Activated naive CD4-positive, alpha-beta T cell treated with anti-CD3 and anti-CD28 coated beads, Interleukin-2, amount 10 ng/mL, durations not matched to agents 7 days and 5 days (primary cell): ENCODE measurements at regions of chr11 and their contacts with region 1.

Region 1: DNA sequence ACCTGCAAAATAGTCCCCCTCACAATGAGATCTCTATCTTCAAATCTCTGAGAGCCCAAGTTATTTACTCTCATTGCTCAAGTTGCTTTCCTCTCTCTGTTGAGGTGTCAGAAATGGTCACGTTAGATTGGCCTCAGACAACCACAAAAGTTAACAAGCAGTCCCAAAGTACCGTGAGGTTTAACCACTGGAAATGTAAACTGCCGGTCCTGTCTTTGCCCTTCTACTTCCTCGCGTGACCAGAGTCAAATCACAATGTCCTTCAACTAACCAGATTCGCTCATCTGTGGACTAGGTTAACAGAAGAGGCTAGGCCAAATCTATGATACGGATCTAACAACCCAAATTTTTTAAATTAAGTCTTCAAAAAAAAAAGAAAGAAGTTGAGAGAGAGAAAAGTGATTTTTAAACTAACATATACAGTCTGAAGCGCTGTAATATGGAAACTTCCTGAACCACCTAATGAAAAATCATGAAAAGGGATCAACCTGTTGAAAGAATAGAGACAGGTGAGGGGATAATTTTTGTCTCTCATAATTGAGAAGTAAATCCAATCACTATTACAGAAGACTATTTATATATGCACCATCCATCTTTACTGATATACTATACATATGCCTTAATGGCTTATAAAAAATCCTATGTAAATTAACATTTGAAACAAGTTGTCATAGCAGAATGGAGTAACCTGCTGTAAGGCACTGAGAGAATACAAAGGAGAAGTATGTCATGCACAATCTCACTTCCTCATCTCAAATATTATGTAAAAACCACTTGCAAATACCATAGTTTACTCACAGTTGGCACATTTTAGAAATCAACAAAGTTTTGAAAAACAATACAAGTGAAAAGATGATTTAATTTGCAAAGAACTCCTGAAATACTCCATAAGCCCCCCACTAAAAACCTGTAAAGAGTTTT is 3.3 kb upstream of the JAML start:
- DNase-seq: no peak
- H3K4me3 Mint-ChIP-seq: no peak overlapping the region
- H3K27ac Mint-ChIP-seq: no peak overlapping the region
- H3K4me1 Mint-ChIP-seq: peaks cover 23% of the 10 kb centered on the region
- H3K27me3 Mint-ChIP-seq: no peaks in the 10 kb centered on the region

Region 2: GRCh38 chr11:118216621-118217481 is 11.3 kb before region 1 on chr11:
- CTCF ChIA-PET with region 1: interaction called, 19 read pairs
- DNase-seq: peak; percentile 50
- H3K4me3 Mint-ChIP-seq: peak overlapping the region; percentile 68
- H3K27ac Mint-ChIP-seq: peak overlapping the region; percentile 94
- H3K4me1 Mint-ChIP-seq: peaks cover 99% of the 10 kb centered on the region
- H3K27me3 Mint-ChIP-seq: no peaks in the 10 kb centered on the region

Region 3: DNA sequence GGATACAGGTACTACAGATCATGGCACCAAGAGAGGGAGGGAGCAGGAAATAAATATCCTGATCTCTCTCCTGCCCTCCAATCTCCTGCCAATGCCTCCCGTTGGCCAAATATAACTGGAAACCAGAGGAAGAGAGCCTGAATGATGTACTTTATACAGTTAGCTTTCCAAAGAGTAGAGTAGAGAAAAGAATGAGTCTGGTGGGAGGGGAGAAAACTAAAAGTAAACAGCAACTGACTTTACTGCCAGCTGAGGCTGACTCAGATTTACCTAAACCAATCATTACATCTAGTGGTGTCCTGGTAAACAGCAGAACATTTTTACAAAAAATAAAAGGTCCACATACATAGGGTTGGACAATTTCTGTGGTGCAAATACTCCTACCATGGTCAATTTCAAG is 18.9 kb after region 1 on chr11:
- CTCF ChIA-PET with region 1: interaction called, 10 read pairs
- DNase-seq: no peak
- H3K4me3 Mint-ChIP-seq: no peak overlapping the region
- H3K27ac Mint-ChIP-seq: no peak overlapping the region
- H3K4me1 Mint-ChIP-seq: peaks cover 60% of the 10 kb centered on the region
- H3K27me3 Mint-ChIP-seq: no peaks in the 10 kb centered on the region